HepG2 (cell line): ENCODE measurements at regions of chr22 and their contacts with region 1.

Region 1: GRCh38 chr22:38218661-38219622 is 17.1 kb downstream of the MAFF start:
- DNase-seq: peak; percentile 76
- ATAC-seq: peak; percentile 84
- H3K4me3 ChIP-seq: peak overlapping the region in 1 of 3 experiments; percentile 43; a peak in 1 of 6 replicates
- H3K27ac ChIP-seq: peak overlapping the region; percentile 65
- H3K4me1 ChIP-seq: peaks cover 25% of the 10 kb centered on the region
- H3K27me3 ChIP-seq: no peaks in the 10 kb centered on the region
- CTCF ChIP-seq: no peak
- EP300 ChIP-seq: peak in 1 of 2 experiments; percentile 43; a peak in 1 of 4 replicates
- POLR2A ChIP-seq: peak in 1 of 2 experiments; percentile 29; a peak in 1 of 4 replicates
- RAD21 ChIP-seq: peak; percentile 54

Region 2: DNA sequence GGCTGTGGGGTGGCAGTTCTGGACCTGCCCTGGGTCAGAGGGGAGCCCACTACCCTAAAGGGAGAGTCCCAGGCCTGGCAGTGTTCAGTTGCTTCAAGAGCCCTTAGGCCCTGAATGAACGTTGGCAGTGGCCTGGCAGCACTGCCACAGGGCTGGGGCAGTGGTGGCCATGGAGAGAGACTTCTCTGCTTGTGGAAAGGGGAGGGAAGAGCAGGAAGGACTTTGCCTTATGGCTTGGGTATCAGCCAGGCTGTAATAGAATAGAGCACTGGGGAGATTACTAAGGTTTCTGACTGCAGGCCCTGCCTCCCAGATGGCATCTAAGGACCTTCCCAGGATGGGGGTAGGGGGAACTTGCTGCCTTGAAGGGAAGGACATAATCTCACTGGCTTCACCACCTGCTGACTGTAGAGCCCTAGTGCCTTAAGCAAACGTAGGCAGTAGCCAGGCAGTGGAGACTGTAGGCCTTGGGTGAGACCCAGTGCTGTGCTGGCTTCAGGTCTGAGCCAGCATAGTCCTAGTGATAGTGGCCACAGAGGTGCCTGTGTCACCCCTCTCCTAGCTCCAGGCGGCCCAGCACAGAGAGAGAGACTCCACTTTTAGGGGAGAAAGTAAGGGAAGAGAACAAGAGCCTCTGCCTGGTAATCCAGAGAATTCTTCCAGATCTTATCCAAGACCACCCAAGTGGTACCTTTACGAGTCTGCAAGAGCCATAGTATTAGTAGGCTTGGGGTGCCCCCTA is 65.0 kb before region 1 on chr22:
- CTCF ChIA-PET with region 1: no interaction called
- POLR2A ChIA-PET with region 1: no interaction called
- in situ Hi-C with region 1: no loop called
- intact Hi-C with region 1: no loop called
- DNase-seq: peak; percentile 32
- ATAC-seq: peak; percentile 95
- H3K4me3 ChIP-seq: no peak overlapping the region
- H3K27ac ChIP-seq: no peak overlapping the region
- H3K4me1 ChIP-seq: peaks cover 30% of the 10 kb centered on the region
- H3K27me3 ChIP-seq: no peaks in the 10 kb centered on the region
- CTCF ChIP-seq: peak; percentile 38
- EP300 ChIP-seq: no peak
- POLR2A ChIP-seq: no peak
- RAD21 ChIP-seq: no peak

Region 3: GRCh38 chr22:38176170-38176741 is 42.7 kb before region 1 on chr22:
- CTCF ChIA-PET with region 1: no interaction called
- POLR2A ChIA-PET with region 1: interaction called, 10 read pairs
- in situ Hi-C with region 1: no loop called
- intact Hi-C with region 1: no loop called
- DNase-seq: no peak
- ATAC-seq: no peak
- H3K4me3 ChIP-seq: no peak overlapping the region
- H3K27ac ChIP-seq: no peak overlapping the region
- H3K4me1 ChIP-seq: peaks cover 73% of the 10 kb centered on the region
- H3K27me3 ChIP-seq: no peaks in the 10 kb centered on the region; a peak in 1 of 5 replicates
- CTCF ChIP-seq: no peak
- EP300 ChIP-seq: no peak
- POLR2A ChIP-seq: no peak
- RAD21 ChIP-seq: no peak

Region 4: DNA sequence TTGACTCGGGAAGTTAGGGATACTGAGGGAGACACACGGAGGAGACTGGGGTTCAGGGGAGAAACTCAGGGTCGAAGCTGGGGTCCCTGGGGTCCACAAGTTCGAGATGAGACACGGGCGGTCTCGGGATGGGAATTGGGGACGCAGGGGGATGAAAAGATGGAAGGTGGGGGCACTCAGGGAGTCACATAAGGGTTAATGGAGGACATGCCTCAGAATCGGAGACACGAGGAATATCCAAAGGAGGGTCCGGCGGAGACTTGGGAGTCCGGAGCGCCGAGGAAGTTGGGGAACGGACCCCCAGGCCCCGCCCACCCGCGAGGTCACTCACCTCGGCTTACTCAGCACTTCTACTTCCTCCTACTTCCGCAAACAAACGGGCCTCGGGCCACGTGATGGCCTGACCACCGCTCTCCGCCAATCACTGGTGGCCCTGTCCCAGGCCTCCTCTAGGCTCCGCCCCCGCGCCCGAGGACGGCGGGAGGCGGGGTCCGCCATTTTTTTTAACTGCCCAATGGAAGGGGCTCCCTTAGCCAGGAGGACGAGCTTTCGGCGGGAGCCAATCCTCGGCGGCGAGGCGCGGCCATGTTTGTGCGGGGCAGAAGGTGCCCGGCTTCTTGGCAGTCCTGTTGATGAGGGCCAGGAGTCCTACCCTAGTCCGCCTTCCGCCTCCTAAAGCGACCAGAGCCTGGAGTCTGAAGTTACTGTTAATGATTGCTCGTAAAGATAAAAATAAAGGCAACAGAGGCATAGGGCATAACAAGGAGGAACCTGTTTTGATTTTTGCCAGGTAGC is 37.3 kb before region 1 on chr22 and contains the start of gene PLA2G6:
- CTCF ChIA-PET with region 1: no interaction called
- POLR2A ChIA-PET with region 1: interaction called, 10 read pairs
- in situ Hi-C with region 1: no loop called
- intact Hi-C with region 1: no loop called
- DNase-seq: peak; percentile 97
- ATAC-seq: peak; percentile 86
- H3K4me3 ChIP-seq: peak within 1 kb of the TSS; percentile 67 to 86 (median 77)
- H3K27ac ChIP-seq: peak within 1 kb of the TSS; percentile 82
- H3K4me1 ChIP-seq: peaks cover 59% of the 10 kb centered on the region
- H3K27me3 ChIP-seq: no peaks in the 10 kb centered on the region; a peak in 1 of 5 replicates
- CTCF ChIP-seq: no peak
- EP300 ChIP-seq: peak in 1 of 2 experiments; percentile 38; a peak in 1 of 4 replicates
- POLR2A ChIP-seq: peak; percentile 57 to 65
- RAD21 ChIP-seq: 0 out of 2 replicates have a peak, but pooled peaks have one; percentile 9
- total RNA-seq, gene PLA2G6: 1.8 and 4.8 TPM in 2 replicates

Region 5: DNA sequence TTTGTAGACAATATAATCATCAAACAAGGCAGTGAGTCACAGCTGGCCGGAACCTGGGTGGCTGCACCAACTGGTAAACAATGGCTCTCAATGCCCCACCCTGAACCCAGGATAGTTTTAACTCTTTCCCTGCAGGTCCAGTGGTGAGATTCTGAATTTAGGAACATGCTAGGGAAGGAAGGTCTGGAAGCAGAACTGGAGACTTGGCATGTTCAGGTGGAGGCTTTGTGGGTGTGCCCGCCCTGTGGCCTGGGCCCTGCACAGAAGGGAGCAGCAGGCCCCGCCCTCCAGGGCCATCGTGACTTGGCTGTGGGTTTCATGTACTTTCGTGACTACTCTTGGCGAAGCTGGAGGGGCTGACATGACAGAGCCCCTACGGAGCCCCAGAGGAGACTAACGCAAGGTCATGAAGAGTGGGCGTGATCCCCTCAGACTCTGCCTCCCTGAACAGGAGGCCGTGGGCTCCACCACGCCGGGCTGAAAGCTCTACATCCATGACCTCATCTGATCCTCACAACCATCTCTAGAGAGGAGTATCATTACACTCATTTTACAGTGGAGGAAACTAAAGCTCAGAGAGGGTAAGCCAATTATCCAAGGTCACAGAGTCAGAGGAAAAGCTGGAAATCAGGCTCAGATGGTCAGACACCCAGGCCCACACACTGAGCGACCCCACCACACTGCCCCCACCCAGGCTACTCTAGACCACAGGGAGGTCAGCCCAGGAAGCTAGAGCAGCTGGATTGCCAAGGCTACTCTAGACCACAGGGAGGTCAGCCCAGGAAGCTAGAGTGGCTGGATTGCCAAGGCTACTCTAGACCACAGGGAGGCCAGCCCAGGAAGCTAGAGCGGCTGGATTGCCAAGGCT is 10.2 kb after region 1 on chr22:
- CTCF ChIA-PET with region 1: no interaction called
- POLR2A ChIA-PET with region 1: interaction called, 11 read pairs
- in situ Hi-C with region 1: no loop called
- intact Hi-C with region 1: no loop called
- DNase-seq: peak; percentile 54
- ATAC-seq: no peak
- H3K4me3 ChIP-seq: no peak overlapping the region
- H3K27ac ChIP-seq: no peak overlapping the region
- H3K4me1 ChIP-seq: peaks cover 26% of the 10 kb centered on the region
- H3K27me3 ChIP-seq: no peaks in the 10 kb centered on the region
- CTCF ChIP-seq: no peak
- EP300 ChIP-seq: no peak
- POLR2A ChIP-seq: no peak
- RAD21 ChIP-seq: no peak